Endothelial cell of umbilical vein (primary cell): ENCODE measurements at regions of chr2 and their contacts with region 1.

Region 1: GRCh38 chr2:160109936-160110673 is 47.7 kb upstream of the PLA2R1 start:
- DNase-seq: peak; percentile 83
- H3K4me3 ChIP-seq: no peak overlapping the region
- H3K27ac ChIP-seq: no peak overlapping the region
- H3K4me1 ChIP-seq: no peaks in the 10 kb centered on the region
- H3K27me3 ChIP-seq: no peaks in the 10 kb centered on the region
- CTCF ChIP-seq: peak; percentile 66 to 72
- POLR2A ChIP-seq: no peak

Region 2: DNA sequence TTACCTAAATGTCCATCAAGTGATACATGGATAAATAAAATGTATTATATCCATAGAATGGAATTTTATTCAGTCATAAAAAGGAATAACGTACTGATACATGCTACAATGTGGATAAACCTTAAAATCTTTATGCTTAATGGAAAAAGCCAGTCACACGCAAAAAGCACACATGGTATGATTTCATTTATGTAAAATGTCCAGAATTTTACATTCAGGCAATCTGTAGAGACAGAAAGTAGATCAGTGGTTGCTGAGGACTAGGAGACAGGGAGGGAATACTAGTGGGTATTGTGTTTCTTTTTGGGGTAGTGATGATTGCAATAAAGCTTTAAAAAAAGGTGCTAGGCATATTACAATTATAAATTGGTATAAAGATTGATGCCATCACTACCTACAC is 281.4 kb before region 1 on chr2:
- CTCF ChIA-PET with region 1: no interaction called
- POLR2A ChIA-PET with region 1: no interaction called
- dilution Hi-C with region 1: no loop called
- intact Hi-C with region 1: no loop called
- DNase-seq: no peak
- H3K4me3 ChIP-seq: no peak overlapping the region
- H3K27ac ChIP-seq: no peak overlapping the region
- H3K4me1 ChIP-seq: no peaks in the 10 kb centered on the region
- H3K27me3 ChIP-seq: no peaks in the 10 kb centered on the region
- CTCF ChIP-seq: no peak
- POLR2A ChIP-seq: no peak

Region 3: GRCh38 chr2:159840616-159841015 is 269.5 kb before region 1 on chr2:
- CTCF ChIA-PET with region 1: no interaction called
- POLR2A ChIA-PET with region 1: no interaction called
- dilution Hi-C with region 1: no loop called
- intact Hi-C with region 1: no loop called
- DNase-seq: no peak
- H3K4me3 ChIP-seq: no peak overlapping the region
- H3K27ac ChIP-seq: no peak overlapping the region
- H3K4me1 ChIP-seq: no peaks in the 10 kb centered on the region
- H3K27me3 ChIP-seq: no peaks in the 10 kb centered on the region
- CTCF ChIP-seq: no peak
- POLR2A ChIP-seq: no peak

Region 4: DNA sequence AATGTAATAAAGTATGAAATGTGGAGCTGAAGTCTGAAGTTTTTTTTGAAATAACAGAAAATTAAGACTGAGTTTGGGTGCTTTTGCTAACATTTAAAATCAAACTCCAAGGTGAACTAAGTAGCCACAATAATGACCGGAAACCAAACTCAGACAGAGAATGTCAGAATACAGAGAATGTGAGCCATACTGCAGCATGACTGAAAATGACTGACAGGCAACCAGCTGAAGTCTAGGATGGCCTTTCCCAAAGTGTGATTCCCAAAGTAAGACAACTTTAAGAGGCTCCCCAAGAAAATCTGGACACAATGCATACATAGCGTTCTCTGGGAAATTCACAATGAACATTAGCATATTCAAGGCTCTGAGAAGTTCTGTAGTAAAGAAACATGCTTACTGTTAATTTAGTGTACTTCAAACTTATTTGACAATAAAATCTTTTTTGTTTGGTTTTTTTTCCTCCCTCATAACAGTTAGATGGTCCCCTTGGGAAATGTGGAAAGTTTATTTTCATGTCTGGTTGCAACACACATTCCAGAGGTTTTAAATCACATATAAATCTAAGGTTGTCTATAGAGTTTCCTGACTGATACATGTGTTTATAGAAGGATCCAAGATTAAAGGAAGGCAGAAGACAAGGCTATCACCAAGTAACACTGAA is 76.2 kb before region 1 on chr2:
- CTCF ChIA-PET with region 1: no interaction called
- POLR2A ChIA-PET with region 1: no interaction called
- dilution Hi-C with region 1: no loop called
- intact Hi-C with region 1: no loop called
- DNase-seq: peak; percentile 87
- H3K4me3 ChIP-seq: no peak overlapping the region
- H3K27ac ChIP-seq: peak overlapping the region; percentile 72
- H3K4me1 ChIP-seq: peaks cover 24% of the 10 kb centered on the region
- H3K27me3 ChIP-seq: no peaks in the 10 kb centered on the region
- CTCF ChIP-seq: no peak
- POLR2A ChIP-seq: no peak

Region 5: DNA sequence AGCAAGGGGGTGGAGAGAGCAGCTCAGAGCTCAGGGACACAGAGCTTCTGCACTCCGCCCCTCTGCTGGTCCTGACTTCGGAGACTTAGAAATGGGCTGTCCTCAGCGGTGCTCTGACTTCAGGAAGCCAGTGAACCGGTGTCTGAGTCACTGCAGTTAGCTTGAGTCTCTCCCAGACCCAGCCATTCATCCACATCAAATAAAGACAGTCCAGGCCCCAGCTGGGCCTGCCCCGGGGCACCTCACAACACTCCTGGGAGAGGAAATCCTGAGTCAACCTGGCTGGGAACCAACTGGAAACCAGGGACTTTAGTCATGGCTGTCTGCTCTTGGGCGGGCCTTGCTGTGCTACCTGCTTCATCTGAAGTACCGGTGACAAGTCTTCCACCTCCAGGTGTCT is 95.4 kb after region 1 on chr2:
- CTCF ChIA-PET with region 1: interaction called, 84 read pairs
- POLR2A ChIA-PET with region 1: no interaction called
- dilution Hi-C with region 1: no loop called
- intact Hi-C with region 1: loop called (anchors 1 kb)
- DNase-seq: peak; percentile 97
- H3K4me3 ChIP-seq: no peak overlapping the region
- H3K27ac ChIP-seq: peak overlapping the region; percentile 91
- H3K4me1 ChIP-seq: peaks cover 48% of the 10 kb centered on the region
- H3K27me3 ChIP-seq: no peaks in the 10 kb centered on the region
- CTCF ChIP-seq: no peak
- POLR2A ChIP-seq: peak; percentile 72

Region 6: DNA sequence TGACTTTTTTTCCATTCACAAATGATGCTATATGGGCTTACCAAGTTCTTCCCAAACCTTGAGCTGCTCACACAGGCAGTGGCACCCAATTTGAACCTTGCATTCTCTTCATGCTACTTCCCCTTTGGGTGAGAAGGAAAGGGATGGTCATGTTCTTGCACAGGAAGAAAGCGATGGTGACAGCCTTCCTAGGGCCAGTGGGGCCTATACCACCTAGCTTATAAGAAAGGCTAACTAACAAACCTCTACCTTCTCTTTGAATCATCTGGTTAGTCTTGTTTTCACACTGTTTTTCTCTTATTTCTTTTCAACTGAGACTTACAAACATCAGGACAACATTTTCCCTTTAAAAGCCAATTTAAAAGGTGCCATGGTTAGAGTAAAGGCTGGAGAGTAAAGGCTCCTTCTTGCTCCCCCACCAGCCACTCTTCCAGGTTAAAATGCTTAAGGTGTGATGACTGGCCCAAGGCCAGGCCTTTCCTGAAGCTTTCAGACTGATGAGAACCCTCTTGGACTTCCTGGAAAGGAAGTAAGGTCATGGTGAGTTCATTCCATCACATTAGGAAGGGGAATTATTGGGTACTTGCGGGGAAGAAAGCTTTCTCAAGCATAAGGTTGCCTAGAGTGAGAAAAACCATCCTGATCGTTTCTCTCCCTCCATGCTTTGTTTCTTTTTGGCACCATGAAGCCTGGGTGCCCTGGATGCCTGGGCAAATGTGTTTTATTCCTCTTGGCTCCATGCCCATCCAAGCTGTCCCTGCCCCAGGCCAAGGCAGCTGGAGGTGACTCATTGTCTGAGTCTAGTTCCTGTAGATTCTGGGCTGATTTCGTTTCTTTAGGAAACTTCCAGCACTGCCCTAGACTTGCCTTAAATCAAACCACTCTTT is 131.4 kb after region 1 on chr2:
- CTCF ChIA-PET with region 1: interaction called, 7 read pairs
- POLR2A ChIA-PET with region 1: no interaction called
- dilution Hi-C with region 1: no loop called
- intact Hi-C with region 1: loop called (anchors 10 kb)
- DNase-seq: peak; percentile 95
- H3K4me3 ChIP-seq: no peak overlapping the region
- H3K27ac ChIP-seq: peak overlapping the region; percentile 82
- H3K4me1 ChIP-seq: peaks cover 33% of the 10 kb centered on the region
- H3K27me3 ChIP-seq: no peaks in the 10 kb centered on the region
- CTCF ChIP-seq: no peak
- POLR2A ChIP-seq: no peak

Region 7: DNA sequence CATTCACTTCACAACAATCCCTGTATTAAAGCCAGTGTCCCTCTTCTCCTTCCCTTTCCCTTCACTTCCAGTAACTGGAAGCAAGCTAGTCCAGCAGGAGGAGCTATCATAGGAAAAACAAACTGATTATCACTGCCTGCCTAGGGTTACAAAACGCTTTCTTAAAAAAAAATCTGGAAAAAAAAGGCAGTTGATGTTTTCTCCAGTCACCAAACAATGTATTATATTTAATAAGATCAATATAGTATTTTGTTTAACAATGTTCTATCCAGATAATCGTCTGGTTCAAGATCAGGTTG is 168.7 kb after region 1 on chr2:
- CTCF ChIA-PET with region 1: interaction called, 14 read pairs
- POLR2A ChIA-PET with region 1: no interaction called
- dilution Hi-C with region 1: no loop called
- intact Hi-C with region 1: loop called (anchors 2 kb)
- DNase-seq: peak; percentile 58
- H3K4me3 ChIP-seq: no peak overlapping the region
- H3K27ac ChIP-seq: peak overlapping the region; percentile 80
- H3K4me1 ChIP-seq: peaks cover 44% of the 10 kb centered on the region
- H3K27me3 ChIP-seq: no peaks in the 10 kb centered on the region
- CTCF ChIP-seq: peak; percentile 29 to 50
- POLR2A ChIP-seq: peak; percentile 0

Region 8: DNA sequence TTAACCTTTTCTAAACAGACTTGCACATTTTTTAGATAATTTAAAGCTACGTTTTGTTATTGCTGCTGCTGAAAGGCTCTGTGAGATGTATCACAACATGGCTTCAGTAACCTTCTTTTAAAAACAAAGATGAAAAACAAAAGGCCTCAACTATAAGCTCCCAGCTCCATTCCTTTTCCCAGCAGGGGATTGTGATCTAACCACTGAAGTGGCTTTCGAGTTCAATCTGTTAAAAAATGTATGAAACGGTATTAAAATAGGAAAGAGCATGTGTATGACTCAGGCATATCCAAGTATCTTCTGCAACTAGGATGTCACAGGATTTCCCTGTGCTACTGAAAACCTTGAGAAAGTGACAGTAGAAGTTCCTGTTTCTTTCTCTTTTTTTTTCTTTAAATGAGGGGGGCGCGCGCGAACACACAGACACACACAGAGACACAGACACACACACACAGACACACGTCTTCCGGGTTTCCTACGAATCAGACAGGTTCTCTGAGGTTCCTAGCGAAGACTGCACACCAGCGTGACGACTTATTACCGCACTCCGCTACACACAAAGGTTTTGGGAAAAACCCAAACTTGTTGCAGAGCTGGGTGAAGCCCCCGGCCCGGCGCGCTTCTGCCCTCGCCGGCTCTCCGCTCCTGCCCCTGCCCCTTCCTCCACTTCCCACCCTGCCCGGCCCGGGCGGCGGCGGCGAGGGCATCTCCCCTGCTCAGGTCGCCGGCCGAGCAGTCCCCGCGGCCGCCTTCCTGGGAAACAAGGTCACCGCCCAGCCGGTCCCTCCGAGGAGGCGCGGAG is 296.7 kb after region 1 on chr2:
- CTCF ChIA-PET with region 1: interaction called, 4 read pairs
- POLR2A ChIA-PET with region 1: no interaction called
- dilution Hi-C with region 1: no loop called
- intact Hi-C with region 1: loop called (anchors 5 kb)
- DNase-seq: peak; percentile 77
- H3K4me3 ChIP-seq: peak overlapping the region; percentile 89 to 98 (median 95)
- H3K27ac ChIP-seq: peak overlapping the region; percentile 90
- H3K4me1 ChIP-seq: peaks cover 72% of the 10 kb centered on the region
- H3K27me3 ChIP-seq: no peaks in the 10 kb centered on the region
- CTCF ChIP-seq: no peak
- POLR2A ChIP-seq: peak; percentile 49

Region 9: DNA sequence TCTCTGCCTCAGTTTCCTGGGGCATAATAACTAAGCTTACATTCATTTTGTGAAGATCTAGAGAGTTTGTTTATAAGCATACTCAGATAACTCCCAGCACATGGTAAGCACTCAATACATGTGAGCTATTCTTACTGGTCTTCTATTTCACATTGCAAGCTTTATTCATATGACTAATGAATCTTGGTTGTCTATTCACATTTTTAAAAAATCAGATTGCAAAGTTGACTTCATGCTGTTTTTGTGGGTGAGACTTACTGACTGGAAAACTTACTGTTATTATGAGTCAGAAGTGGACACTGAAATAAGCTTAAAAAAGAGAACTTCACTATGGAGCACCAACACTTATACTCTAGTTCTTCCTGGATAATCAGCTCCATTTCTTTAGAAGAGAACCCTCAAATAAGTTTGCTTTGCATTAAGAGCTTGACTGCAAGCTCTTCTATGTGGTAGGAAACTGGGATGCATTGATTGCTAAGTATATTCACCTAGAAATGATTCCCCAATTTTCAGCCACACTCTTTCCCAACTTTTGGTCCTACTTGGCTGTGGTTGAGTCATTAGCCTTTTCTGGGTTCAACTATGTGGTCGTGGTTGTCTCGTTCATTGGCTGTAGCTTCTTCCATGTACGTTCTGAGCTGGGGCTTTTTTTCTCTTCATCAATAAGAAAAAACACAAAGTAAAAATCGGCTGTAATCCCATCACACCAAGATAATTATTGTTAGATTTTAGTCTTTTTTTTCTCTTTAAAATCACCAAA is 413.0 kb after region 1 on chr2:
- CTCF ChIA-PET with region 1: no interaction called
- POLR2A ChIA-PET with region 1: no interaction called
- dilution Hi-C with region 1: no loop called
- intact Hi-C with region 1: no loop called
- DNase-seq: no peak
- H3K4me3 ChIP-seq: no peak overlapping the region
- H3K27ac ChIP-seq: no peak overlapping the region
- H3K4me1 ChIP-seq: no peaks in the 10 kb centered on the region
- H3K27me3 ChIP-seq: no peaks in the 10 kb centered on the region
- CTCF ChIP-seq: no peak
- POLR2A ChIP-seq: no peak

Region 10: GRCh38 chr2:161004379-161004778 is 894.3 kb after region 1 on chr2:
- CTCF ChIA-PET with region 1: interaction called, 36 read pairs
- POLR2A ChIA-PET with region 1: no interaction called
- dilution Hi-C with region 1: no loop called
- intact Hi-C with region 1: no loop called
- DNase-seq: peak; percentile 22
- H3K4me3 ChIP-seq: no peak overlapping the region
- H3K27ac ChIP-seq: no peak overlapping the region
- H3K4me1 ChIP-seq: no peaks in the 10 kb centered on the region
- H3K27me3 ChIP-seq: no peaks in the 10 kb centered on the region
- CTCF ChIP-seq: peak; percentile 21 to 31
- POLR2A ChIP-seq: no peak